GM18951 (cell line): ENCODE measurements at regions of chr2 and their contacts with region 1.

Region 1: GRCh38 chr2:98649135-98649991 is 41.0 kb downstream of the UNC50 start:
- POLR2A ChIP-seq: no peak

Region 2: DNA sequence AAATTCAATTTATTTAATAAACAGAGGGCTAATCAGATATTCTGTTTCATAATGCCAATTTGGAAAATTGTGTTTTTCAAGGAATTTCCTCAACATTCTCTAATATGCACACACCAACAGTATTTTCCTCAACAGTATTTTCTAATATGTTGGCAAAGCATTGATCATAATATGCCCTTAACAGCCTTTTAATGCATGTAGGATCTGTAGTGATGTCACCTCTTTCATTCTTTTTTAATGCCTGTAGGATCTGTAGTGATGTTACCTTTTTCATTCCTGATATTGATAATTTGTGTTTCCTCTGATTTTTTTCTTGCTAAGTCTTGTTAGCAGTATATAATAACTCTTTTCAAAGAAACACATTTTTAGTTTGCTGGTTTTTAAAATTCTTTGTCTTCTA is 546.5 kb before region 1 on chr2:
- in situ Hi-C with region 1: no loop called
- POLR2A ChIP-seq: no peak

Region 3: DNA sequence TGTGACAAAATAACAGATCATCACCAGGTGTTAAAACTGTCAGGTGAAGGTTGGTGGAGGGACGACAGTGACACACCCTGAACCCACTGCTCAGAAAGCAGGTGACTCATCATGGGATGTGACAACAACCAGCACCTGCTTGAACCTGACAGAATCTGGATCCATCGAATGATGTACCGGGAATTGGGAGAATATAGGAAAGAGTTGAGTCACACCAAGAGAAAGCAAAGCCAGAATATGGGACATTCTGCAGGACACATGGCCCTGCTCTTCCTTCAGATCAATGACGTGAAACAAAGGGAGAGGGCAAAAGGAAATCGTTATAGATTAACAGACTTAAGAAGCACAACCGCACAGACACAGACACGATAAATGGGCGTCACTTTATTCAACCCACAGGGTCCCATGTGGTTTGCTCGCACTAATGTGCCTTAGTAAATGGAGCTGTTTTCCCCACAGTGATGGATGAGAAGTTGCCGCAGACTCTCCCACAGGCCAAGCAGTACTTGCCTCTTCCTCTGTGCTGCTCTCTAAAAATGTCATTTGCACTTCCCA is 186.5 kb after region 1 on chr2:
- in situ Hi-C with region 1: loop called (anchors 10 kb)
- POLR2A ChIP-seq: no peak

Region 4: GRCh38 chr2:99066075-99066958 is 417.0 kb after region 1 on chr2:
- in situ Hi-C with region 1: loop called (anchors 10 kb)
- POLR2A ChIP-seq: no peak